B cell (primary cell): ENCODE measurements at regions of chr11 and their contacts with region 1.

Region 1: GRCh38 chr11:79440441-79441194 is at the start of gene TENM4:
- DNase-seq: peak; percentile 85
- ATAC-seq: peak; percentile 76
- H3K4me3 ChIP-seq: peak within 1 kb of the TSS in 4 of 5 experiments; percentile 45 to 66 (median 60)
- H3K4me3 Mint-ChIP-seq: peak within 1 kb of the TSS; percentile 91
- H3K27ac ChIP-seq: peak within 1 kb of the TSS; percentile 61 to 91
- H3K27ac Mint-ChIP-seq: peak within 1 kb of the TSS; percentile 93
- H3K4me1 ChIP-seq: peaks cover 44% of the 10 kb centered on the region in 2 donors
- H3K4me1 Mint-ChIP-seq: peaks cover 40% of the 10 kb centered on the region
- H3K27me3 ChIP-seq: peaks cover 0 to 48% (median 30%) of the 10 kb centered on the region in 4 experiments
- H3K27me3 Mint-ChIP-seq: peaks cover 42% of the 10 kb centered on the region
- CTCF ChIP-seq: peak; percentile 64
- total RNA-seq, gene TENM4: 2.1 and 5.7 TPM in 2 replicates

Region 2: DNA sequence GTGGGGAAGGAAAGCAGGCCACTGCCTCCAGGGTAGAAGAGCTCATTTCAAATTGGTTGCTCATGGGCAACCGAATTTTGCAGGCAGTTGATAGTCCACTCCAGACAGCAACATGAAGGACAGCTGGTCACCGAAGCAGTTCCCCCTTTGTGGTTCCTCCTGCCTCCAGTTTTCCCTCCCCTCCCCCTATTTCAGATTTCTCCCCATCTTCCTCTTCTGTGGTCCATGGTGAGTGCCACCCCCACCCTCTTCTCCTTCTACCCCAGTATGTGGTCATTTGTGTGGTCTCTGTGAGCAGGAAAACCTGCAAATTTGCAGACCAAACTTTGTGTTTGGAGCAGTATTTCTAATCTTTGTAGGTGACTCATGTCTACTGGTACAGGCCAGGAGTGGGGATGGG is 1928.5 kb before region 1 on chr11:
- CTCF ChIA-PET with region 1: no interaction called
- POLR2A ChIA-PET with region 1: no interaction called
- intact Hi-C with region 1: no loop called
- DNase-seq: no peak
- ATAC-seq: no peak
- H3K4me3 ChIP-seq: no peak overlapping the region
- H3K4me3 Mint-ChIP-seq: no peak overlapping the region
- H3K27ac ChIP-seq: no peak overlapping the region
- H3K27ac Mint-ChIP-seq: no peak overlapping the region
- H3K4me1 ChIP-seq: no peaks in the 10 kb centered on the region
- H3K4me1 Mint-ChIP-seq: no peaks in the 10 kb centered on the region
- H3K27me3 ChIP-seq: peaks cover 0 to 2% (median under 1%) of the 10 kb centered on the region in 4 experiments
- H3K27me3 Mint-ChIP-seq: peaks cover 21% of the 10 kb centered on the region
- CTCF ChIP-seq: no peak

Region 3: GRCh38 chr11:79400717-79401686 is 39.6 kb before region 1 on chr11:
- CTCF ChIA-PET with region 1: interaction called, 15 read pairs
- POLR2A ChIA-PET with region 1: no interaction called
- intact Hi-C with region 1: loop called (anchors 2 kb)
- DNase-seq: peak; percentile 30
- ATAC-seq: peak; percentile 56
- H3K4me3 ChIP-seq: no peak overlapping the region
- H3K4me3 Mint-ChIP-seq: no peak overlapping the region
- H3K27ac ChIP-seq: no peak overlapping the region
- H3K27ac Mint-ChIP-seq: no peak overlapping the region
- H3K4me1 ChIP-seq: peaks cover 3 to 5% of the 10 kb centered on the region in 2 donors
- H3K4me1 Mint-ChIP-seq: peaks cover 7% of the 10 kb centered on the region
- H3K27me3 ChIP-seq: peaks cover 0 to 11% (median 0%) of the 10 kb centered on the region in 4 experiments
- H3K27me3 Mint-ChIP-seq: peaks cover 8% of the 10 kb centered on the region
- CTCF ChIP-seq: peak; percentile 54

Region 4: DNA sequence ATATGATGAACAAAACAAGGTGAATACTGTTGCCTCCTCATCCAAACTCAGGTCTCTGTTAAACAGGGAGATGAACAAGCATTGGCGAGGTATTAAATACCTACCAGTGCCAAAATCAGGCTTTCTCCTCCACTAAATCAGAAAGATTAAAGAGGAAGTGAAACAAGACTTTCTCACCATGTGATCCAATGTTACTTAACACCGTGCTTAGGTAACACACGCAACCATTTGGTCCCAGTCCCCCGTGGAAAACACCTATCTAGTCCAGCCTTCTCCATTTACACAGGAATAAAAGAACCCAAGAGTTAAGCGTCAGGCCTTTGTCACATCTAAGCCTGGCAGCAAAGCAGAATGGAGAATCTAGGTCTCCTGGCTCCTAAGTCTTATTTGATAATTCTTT is 34.2 kb before region 1 on chr11:
- CTCF ChIA-PET with region 1: interaction called, 15 read pairs
- POLR2A ChIA-PET with region 1: no interaction called
- intact Hi-C with region 1: loop called (anchors 2 kb)
- DNase-seq: peak; percentile 75
- ATAC-seq: peak; percentile 79
- H3K4me3 ChIP-seq: no peak overlapping the region
- H3K4me3 Mint-ChIP-seq: peak overlapping the region; percentile 37
- H3K27ac ChIP-seq: peak overlapping the region in 1 of 2 donors; percentile 3
- H3K27ac Mint-ChIP-seq: no peak overlapping the region
- H3K4me1 ChIP-seq: peaks cover 11 to 12% of the 10 kb centered on the region in 2 donors
- H3K4me1 Mint-ChIP-seq: peaks cover 11% of the 10 kb centered on the region
- H3K27me3 ChIP-seq: no peaks in the 10 kb centered on the region
- H3K27me3 Mint-ChIP-seq: peaks cover 3% of the 10 kb centered on the region
- CTCF ChIP-seq: no peak

Region 5: GRCh38 chr11:79482800-79483199 is 42.2 kb after region 1 on chr11:
- CTCF ChIA-PET with region 1: interaction called, 10 read pairs
- POLR2A ChIA-PET with region 1: interaction called, 3 read pairs
- intact Hi-C with region 1: loop called (anchors 5 kb)
- DNase-seq: peak; percentile 53
- ATAC-seq: peak; percentile 77
- H3K4me3 ChIP-seq: no peak overlapping the region
- H3K4me3 Mint-ChIP-seq: peak overlapping the region; percentile 19
- H3K27ac ChIP-seq: peak overlapping the region; percentile 15 to 16
- H3K27ac Mint-ChIP-seq: peak overlapping the region; percentile 70
- H3K4me1 ChIP-seq: peaks cover 19 to 24% of the 10 kb centered on the region in 2 donors
- H3K4me1 Mint-ChIP-seq: peaks cover 29% of the 10 kb centered on the region
- H3K27me3 ChIP-seq: no peaks in the 10 kb centered on the region
- H3K27me3 Mint-ChIP-seq: no peaks in the 10 kb centered on the region
- CTCF ChIP-seq: no peak

Region 6: GRCh38 chr11:79822766-79823165 is 382.1 kb after region 1 on chr11:
- CTCF ChIA-PET with region 1: no interaction called
- POLR2A ChIA-PET with region 1: no interaction called
- intact Hi-C with region 1: no loop called
- DNase-seq: no peak
- ATAC-seq: no peak
- H3K4me3 ChIP-seq: no peak overlapping the region
- H3K4me3 Mint-ChIP-seq: no peak overlapping the region
- H3K27ac ChIP-seq: no peak overlapping the region
- H3K27ac Mint-ChIP-seq: no peak overlapping the region
- H3K4me1 ChIP-seq: no peaks in the 10 kb centered on the region
- H3K4me1 Mint-ChIP-seq: no peaks in the 10 kb centered on the region
- H3K27me3 ChIP-seq: no peaks in the 10 kb centered on the region
- H3K27me3 Mint-ChIP-seq: no peaks in the 10 kb centered on the region
- CTCF ChIP-seq: no peak